ENCODE measurements at regions of chr16 and their contacts with region 1.

Region 1: DNA sequence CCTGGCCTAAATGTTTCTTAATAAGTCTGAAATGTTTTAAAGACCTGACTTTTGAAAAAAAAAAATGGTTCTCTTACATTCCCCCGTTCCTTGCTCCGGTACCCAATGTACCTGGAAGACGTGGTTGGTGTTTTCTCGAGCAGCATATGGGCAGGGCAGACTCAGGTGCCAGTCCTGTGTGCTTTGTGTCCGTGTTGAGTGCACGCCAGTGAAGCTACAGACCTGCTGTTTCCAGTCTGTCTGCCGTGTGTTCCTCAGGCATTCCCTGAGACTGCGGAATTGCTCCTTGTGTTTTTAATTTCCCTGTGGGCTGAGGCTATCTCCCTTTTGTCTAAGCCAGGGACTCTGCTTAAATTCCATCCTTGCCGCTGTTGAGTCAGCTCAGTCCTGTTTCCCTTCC is 11.7 kb upstream of the IL17C start:
- DNase-seq: no peak
- ATAC-seq: no peak

Region 2: GRCh38 chr16:88580371-88580770 is 46.3 kb before region 1 on chr16:
- intact Hi-C with region 1: loop called (anchors 1 kb)
- DNase-seq: no peak
- ATAC-seq: no peak

Measured in sciatic nerve (tissue), 2 donors.